B cell (primary cell): ENCODE measurements at regions of chr3 and their contacts with region 1.

Region 1: DNA sequence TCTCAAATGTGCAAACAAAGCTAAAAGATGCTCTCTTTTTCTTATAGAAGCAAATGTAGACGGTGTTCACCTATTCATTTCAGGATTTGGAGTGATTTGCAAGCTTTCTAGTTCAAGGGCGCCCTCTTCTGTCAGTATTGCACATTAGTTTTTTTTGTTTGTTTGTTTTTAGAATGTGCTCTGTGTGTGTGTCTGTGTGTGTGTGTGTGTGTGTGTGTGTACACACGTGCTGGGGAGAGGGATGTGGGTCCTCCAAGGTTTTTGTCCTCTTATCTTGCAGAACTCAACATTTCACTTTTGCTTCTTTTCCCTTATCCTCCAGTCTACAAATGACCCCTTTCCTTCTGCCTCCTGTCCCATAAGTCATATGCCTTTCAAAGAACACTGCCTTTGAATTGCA is 23.5 kb downstream of the DNAH1 start:
- DNase-seq: peak; percentile 83
- ATAC-seq: peak; percentile 68
- H3K4me3 ChIP-seq: no peak overlapping the region
- H3K4me3 Mint-ChIP-seq: no peak overlapping the region
- H3K27ac ChIP-seq: no peak overlapping the region
- H3K27ac Mint-ChIP-seq: peak overlapping the region; percentile 61
- H3K4me1 ChIP-seq: no peaks in the 10 kb centered on the region
- H3K4me1 Mint-ChIP-seq: peaks cover 3% of the 10 kb centered on the region
- H3K27me3 ChIP-seq: no peaks in the 10 kb centered on the region
- H3K27me3 Mint-ChIP-seq: no peaks in the 10 kb centered on the region
- CTCF ChIP-seq: peak; percentile 86

Region 2: DNA sequence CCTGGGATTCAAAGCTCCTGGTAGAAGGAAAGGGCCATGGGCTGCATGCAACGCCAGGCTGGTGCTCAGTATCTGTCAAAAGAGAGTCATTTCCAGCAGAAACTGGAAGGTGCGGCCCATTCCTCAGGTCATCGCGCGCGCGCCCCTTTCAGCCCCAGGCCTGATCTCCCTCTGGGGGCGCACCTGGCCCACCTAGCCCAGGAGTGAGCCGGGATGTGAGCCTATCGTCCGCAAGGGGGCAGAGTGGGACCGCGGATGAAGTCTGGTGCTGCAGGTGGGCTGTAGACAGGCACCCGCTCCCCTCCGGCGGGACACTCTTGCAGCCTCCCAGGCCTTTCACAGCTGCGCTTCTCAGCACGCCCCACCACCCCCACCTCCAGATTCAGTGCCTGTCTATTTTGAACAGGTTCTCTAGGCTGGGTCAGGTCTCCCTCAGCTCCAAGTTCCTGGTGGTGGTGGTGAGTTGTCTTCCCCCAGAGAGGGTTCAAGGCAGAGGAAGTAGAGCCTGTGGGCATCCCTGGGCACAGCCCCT is 338.1 kb before region 1 on chr3:
- CTCF ChIA-PET with region 1: interaction called, 8 read pairs
- POLR2A ChIA-PET with region 1: no interaction called
- intact Hi-C with region 1: loop called (anchors 2 kb)
- DNase-seq: peak; percentile 91
- ATAC-seq: peak; percentile 99
- H3K4me3 ChIP-seq: no peak overlapping the region
- H3K4me3 Mint-ChIP-seq: no peak overlapping the region
- H3K27ac ChIP-seq: no peak overlapping the region
- H3K27ac Mint-ChIP-seq: peak overlapping the region; percentile 37
- H3K4me1 ChIP-seq: peaks cover 6 to 13% of the 10 kb centered on the region in 2 donors
- H3K4me1 Mint-ChIP-seq: peaks cover 5% of the 10 kb centered on the region
- H3K27me3 ChIP-seq: no peaks in the 10 kb centered on the region
- H3K27me3 Mint-ChIP-seq: peaks cover 6% of the 10 kb centered on the region
- CTCF ChIP-seq: peak; percentile 90

Region 3: GRCh38 chr3:52162250-52162872 is 177.3 kb before region 1 on chr3:
- CTCF ChIA-PET with region 1: no interaction called
- POLR2A ChIA-PET with region 1: no interaction called
- intact Hi-C with region 1: no loop called
- DNase-seq: no peak
- ATAC-seq: no peak
- H3K4me3 ChIP-seq: no peak overlapping the region
- H3K4me3 Mint-ChIP-seq: no peak overlapping the region
- H3K27ac ChIP-seq: no peak overlapping the region
- H3K27ac Mint-ChIP-seq: no peak overlapping the region
- H3K4me1 ChIP-seq: no peaks in the 10 kb centered on the region
- H3K4me1 Mint-ChIP-seq: no peaks in the 10 kb centered on the region
- H3K27me3 ChIP-seq: no peaks in the 10 kb centered on the region
- H3K27me3 Mint-ChIP-seq: no peaks in the 10 kb centered on the region
- CTCF ChIP-seq: no peak

Region 4: DNA sequence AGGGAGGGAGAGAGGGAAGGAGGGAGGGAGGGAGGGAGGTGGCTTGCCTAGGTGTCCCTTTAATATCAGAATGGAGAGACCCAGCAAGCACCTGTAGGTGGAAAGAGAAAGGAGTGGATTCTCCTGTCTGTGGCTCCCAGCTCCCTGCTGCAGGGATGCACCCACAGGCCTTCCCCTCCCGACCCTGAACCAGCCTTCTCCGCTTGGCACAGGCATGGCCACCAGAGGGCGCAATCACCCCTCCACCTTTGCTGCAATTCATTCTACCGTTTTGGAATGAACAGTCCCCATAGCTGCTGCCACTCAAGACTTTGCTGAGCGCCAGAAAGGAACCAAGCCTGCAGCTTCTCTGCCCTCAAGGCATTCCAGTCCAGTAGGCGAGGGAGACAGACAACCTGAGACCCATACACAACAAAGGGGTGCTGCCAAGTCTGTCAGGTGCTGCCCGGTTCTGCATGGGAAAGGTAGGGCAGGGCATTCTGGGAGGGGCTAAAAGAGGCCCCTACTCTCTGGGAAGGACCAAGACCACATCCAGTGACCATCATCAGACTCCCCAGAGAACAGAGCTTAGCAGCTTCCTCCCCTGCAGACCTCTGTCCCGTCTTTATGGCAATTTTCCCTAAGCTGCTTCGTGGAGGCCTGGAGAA is 119.1 kb before region 1 on chr3:
- CTCF ChIA-PET with region 1: interaction called, 177 read pairs
- POLR2A ChIA-PET with region 1: interaction called, 5 read pairs
- intact Hi-C with region 1: loop called (anchors 1 kb)
- DNase-seq: peak; percentile 85
- ATAC-seq: peak; percentile 59
- H3K4me3 ChIP-seq: no peak overlapping the region
- H3K4me3 Mint-ChIP-seq: peak overlapping the region; percentile 66
- H3K27ac ChIP-seq: no peak overlapping the region
- H3K27ac Mint-ChIP-seq: peak overlapping the region; percentile 86
- H3K4me1 ChIP-seq: peaks cover 64 to 90% of the 10 kb centered on the region in 2 donors
- H3K4me1 Mint-ChIP-seq: peaks cover 78% of the 10 kb centered on the region
- H3K27me3 ChIP-seq: no peaks in the 10 kb centered on the region
- H3K27me3 Mint-ChIP-seq: no peaks in the 10 kb centered on the region
- CTCF ChIP-seq: peak; percentile 83

Region 5: DNA sequence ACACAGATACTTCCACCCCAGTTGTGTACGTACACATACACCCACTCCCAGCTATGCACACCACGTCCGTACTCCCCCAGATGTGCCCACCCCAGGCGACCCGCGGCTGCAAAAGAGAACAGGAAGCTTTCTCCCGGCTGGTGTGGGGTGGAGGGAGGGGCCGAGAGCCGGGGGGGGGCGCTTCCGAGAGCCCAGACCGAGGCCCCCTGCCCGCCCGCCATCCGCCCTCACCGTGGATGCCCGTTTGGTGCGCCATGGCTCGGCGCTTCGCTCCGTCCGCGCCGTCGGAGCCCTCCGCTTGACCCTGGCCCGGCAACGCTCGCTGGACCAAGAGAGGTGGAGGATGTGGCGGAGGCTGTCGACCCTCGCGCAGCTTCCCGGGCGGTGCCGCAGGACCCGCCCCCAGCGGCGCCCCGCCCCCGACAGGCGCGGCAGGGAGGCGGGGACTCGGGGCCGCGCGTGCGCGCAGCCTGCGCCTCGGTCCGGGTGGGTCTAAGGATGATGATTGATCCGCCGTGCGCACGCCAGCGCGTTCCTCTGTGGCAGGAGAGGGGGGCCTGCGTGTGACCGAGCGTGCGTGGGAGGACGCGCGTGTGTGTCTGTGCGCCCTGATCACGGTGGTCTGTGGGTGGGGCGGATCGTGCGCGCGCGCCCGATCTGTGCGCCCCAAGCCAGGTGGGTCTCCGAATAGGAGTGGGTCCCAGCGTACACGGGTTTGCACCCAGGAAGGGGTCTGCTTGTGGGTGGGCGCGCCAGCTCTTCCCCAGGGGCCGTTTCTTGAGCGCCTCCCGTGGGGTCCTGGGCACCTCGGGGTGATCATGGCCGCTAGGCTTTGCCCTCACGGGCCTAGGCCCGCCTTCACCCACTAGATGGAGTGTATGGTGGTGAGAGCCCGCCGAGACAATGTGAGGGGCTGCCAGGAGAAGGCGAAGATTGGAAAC is 100.6 kb before region 1 on chr3 and contains the start of gene TWF2:
- CTCF ChIA-PET with region 1: interaction called, 135 read pairs
- POLR2A ChIA-PET with region 1: interaction called, 4 read pairs
- intact Hi-C with region 1: no loop called
- DNase-seq: peak; percentile 92
- ATAC-seq: peak; percentile 90
- H3K4me3 ChIP-seq: peak within 1 kb of the TSS; percentile 75 to 99 (median 93)
- H3K4me3 Mint-ChIP-seq: peak within 1 kb of the TSS; percentile 99
- H3K27ac ChIP-seq: peak within 1 kb of the TSS; percentile 53 to 63
- H3K27ac Mint-ChIP-seq: peak within 1 kb of the TSS; percentile 93
- H3K4me1 ChIP-seq: peaks cover 41 to 56% of the 10 kb centered on the region in 2 donors
- H3K4me1 Mint-ChIP-seq: peaks cover 61% of the 10 kb centered on the region
- H3K27me3 ChIP-seq: no peaks in the 10 kb centered on the region
- H3K27me3 Mint-ChIP-seq: no peaks in the 10 kb centered on the region
- CTCF ChIP-seq: peak; percentile 68
- total RNA-seq, gene TWF2: 53.5 and 60.3 TPM in 2 replicates

Region 6: GRCh38 chr3:52308308-52308707 is 31.3 kb before region 1 on chr3:
- CTCF ChIA-PET with region 1: interaction called, 20 read pairs
- POLR2A ChIA-PET with region 1: no interaction called
- intact Hi-C with region 1: loop called (anchors 1 kb)
- DNase-seq: no peak
- ATAC-seq: no peak
- H3K4me3 ChIP-seq: no peak overlapping the region
- H3K4me3 Mint-ChIP-seq: no peak overlapping the region
- H3K27ac ChIP-seq: no peak overlapping the region
- H3K27ac Mint-ChIP-seq: peak overlapping the region; percentile 81
- H3K4me1 ChIP-seq: peaks cover 20 to 31% of the 10 kb centered on the region in 2 donors
- H3K4me1 Mint-ChIP-seq: peaks cover 40% of the 10 kb centered on the region
- H3K27me3 ChIP-seq: no peaks in the 10 kb centered on the region
- H3K27me3 Mint-ChIP-seq: no peaks in the 10 kb centered on the region
- CTCF ChIP-seq: no peak

Region 7: GRCh38 chr3:52328536-52329080 is 11.0 kb before region 1 on chr3:
- CTCF ChIA-PET with region 1: interaction called, 30 read pairs
- POLR2A ChIA-PET with region 1: no interaction called
- intact Hi-C with region 1: no loop called
- DNase-seq: no peak
- ATAC-seq: no peak
- H3K4me3 ChIP-seq: no peak overlapping the region
- H3K4me3 Mint-ChIP-seq: no peak overlapping the region
- H3K27ac ChIP-seq: no peak overlapping the region
- H3K27ac Mint-ChIP-seq: no peak overlapping the region
- H3K4me1 ChIP-seq: no peaks in the 10 kb centered on the region
- H3K4me1 Mint-ChIP-seq: no peaks in the 10 kb centered on the region
- H3K27me3 ChIP-seq: no peaks in the 10 kb centered on the region
- H3K27me3 Mint-ChIP-seq: no peaks in the 10 kb centered on the region
- CTCF ChIP-seq: no peak